B cell (primary cell): ENCODE measurements at regions of chr9 and their contacts with region 1.

Region 1: GRCh38 chr9:112074250-112075008 is 100.7 kb downstream of the SUSD1 start:
- DNase-seq: peak; percentile 82
- ATAC-seq: peak; percentile 80
- H3K4me3 ChIP-seq: peak overlapping the region in 1 of 5 experiments; percentile 9
- H3K4me3 Mint-ChIP-seq: peak overlapping the region; percentile 74
- H3K27ac ChIP-seq: peak overlapping the region; percentile 16 to 38
- H3K27ac Mint-ChIP-seq: peak overlapping the region; percentile 77
- H3K4me1 ChIP-seq: peaks cover 39 to 72% of the 10 kb centered on the region in 2 donors
- H3K4me1 Mint-ChIP-seq: peaks cover 65% of the 10 kb centered on the region
- H3K27me3 ChIP-seq: no peaks in the 10 kb centered on the region
- H3K27me3 Mint-ChIP-seq: no peaks in the 10 kb centered on the region
- CTCF ChIP-seq: peak; percentile 99

Region 2: GRCh38 chr9:111759762-111760639 is 314.4 kb before region 1 on chr9:
- CTCF ChIA-PET with region 1: interaction called, 274 read pairs
- POLR2A ChIA-PET with region 1: no interaction called
- intact Hi-C with region 1: loop called (anchors 1 kb)
- DNase-seq: peak; percentile 82
- ATAC-seq: peak; percentile 82
- H3K4me3 ChIP-seq: no peak overlapping the region
- H3K4me3 Mint-ChIP-seq: no peak overlapping the region
- H3K27ac ChIP-seq: no peak overlapping the region
- H3K27ac Mint-ChIP-seq: no peak overlapping the region
- H3K4me1 ChIP-seq: peaks cover 0 to 3% of the 10 kb centered on the region in 2 donors
- H3K4me1 Mint-ChIP-seq: peaks cover 4% of the 10 kb centered on the region
- H3K27me3 ChIP-seq: no peaks in the 10 kb centered on the region
- H3K27me3 Mint-ChIP-seq: no peaks in the 10 kb centered on the region
- CTCF ChIP-seq: peak; percentile 91

Region 3: DNA sequence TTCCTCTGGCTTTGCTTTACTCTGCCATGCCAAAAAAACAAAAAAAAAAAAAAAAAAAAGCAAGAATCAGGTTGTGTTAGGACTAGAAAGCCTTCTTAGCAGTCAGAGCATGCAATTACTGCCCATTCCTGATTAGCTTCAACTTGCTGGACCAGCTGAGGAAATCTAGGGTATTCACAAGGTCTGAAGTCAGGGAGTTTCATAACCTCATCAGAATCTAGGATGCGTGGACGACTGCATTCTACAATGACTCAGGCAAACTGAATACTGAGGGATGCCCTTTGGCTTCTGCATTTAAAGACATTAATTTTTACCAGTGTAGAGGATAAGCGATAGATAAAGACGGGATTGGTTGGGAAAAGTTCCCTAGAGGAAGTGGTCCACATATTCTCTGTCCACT is 240.5 kb before region 1 on chr9:
- CTCF ChIA-PET with region 1: interaction called, 46 read pairs
- POLR2A ChIA-PET with region 1: no interaction called
- intact Hi-C with region 1: no loop called
- DNase-seq: no peak
- ATAC-seq: no peak
- H3K4me3 ChIP-seq: no peak overlapping the region
- H3K4me3 Mint-ChIP-seq: no peak overlapping the region
- H3K27ac ChIP-seq: no peak overlapping the region
- H3K27ac Mint-ChIP-seq: no peak overlapping the region
- H3K4me1 ChIP-seq: peaks cover 3 to 4% of the 10 kb centered on the region in 2 donors
- H3K4me1 Mint-ChIP-seq: peaks cover 7% of the 10 kb centered on the region
- H3K27me3 ChIP-seq: no peaks in the 10 kb centered on the region
- H3K27me3 Mint-ChIP-seq: no peaks in the 10 kb centered on the region
- CTCF ChIP-seq: no peak

Region 4: DNA sequence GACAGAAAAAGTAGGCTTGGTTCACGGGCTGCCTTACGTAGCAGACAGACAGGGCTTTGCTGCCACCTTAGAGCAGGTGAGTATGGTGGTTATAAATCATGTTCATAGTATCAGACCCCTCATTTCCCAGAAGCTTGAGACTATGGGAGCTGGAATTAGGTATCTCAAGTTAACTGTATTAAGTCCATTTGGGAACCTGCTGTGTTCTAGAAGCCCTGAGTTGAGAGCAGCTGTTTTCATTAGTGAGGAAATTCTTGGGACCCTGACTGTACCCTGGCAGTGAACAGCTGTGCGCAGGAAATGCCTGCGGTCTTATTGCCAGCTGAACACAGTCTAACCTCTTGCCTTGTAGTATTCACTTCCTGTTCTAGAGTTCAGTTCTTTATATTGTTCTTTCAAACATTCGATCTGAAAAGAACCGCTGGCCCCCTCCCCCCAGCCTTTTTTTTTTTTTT is 148.0 kb before region 1 on chr9:
- CTCF ChIA-PET with region 1: interaction called, 12 read pairs
- POLR2A ChIA-PET with region 1: interaction called, 9 read pairs
- intact Hi-C with region 1: loop called (anchors 1 kb)
- DNase-seq: peak; percentile 86
- ATAC-seq: peak; percentile 99
- H3K4me3 ChIP-seq: no peak overlapping the region
- H3K4me3 Mint-ChIP-seq: peak overlapping the region; percentile 33
- H3K27ac ChIP-seq: peak overlapping the region; percentile 25 to 72
- H3K27ac Mint-ChIP-seq: peak overlapping the region; percentile 90
- H3K4me1 ChIP-seq: peaks cover 22 to 32% of the 10 kb centered on the region in 2 donors
- H3K4me1 Mint-ChIP-seq: peaks cover 39% of the 10 kb centered on the region
- H3K27me3 ChIP-seq: no peaks in the 10 kb centered on the region
- H3K27me3 Mint-ChIP-seq: no peaks in the 10 kb centered on the region
- CTCF ChIP-seq: no peak

Region 5: GRCh38 chr9:112012026-112012902 is 62.2 kb before region 1 on chr9:
- CTCF ChIA-PET with region 1: interaction called, 18 read pairs
- POLR2A ChIA-PET with region 1: interaction called, 3 read pairs
- intact Hi-C with region 1: loop called (anchors 10 kb)
- DNase-seq: peak; percentile 62
- ATAC-seq: peak; percentile 82
- H3K4me3 ChIP-seq: peak overlapping the region in 1 of 5 experiments; percentile 22
- H3K4me3 Mint-ChIP-seq: peak overlapping the region; percentile 57
- H3K27ac ChIP-seq: peak overlapping the region; percentile 56 to 74
- H3K27ac Mint-ChIP-seq: peak overlapping the region; percentile 88
- H3K4me1 ChIP-seq: peaks cover 44% of the 10 kb centered on the region in 2 donors
- H3K4me1 Mint-ChIP-seq: peaks cover 65% of the 10 kb centered on the region
- H3K27me3 ChIP-seq: no peaks in the 10 kb centered on the region
- H3K27me3 Mint-ChIP-seq: no peaks in the 10 kb centered on the region
- CTCF ChIP-seq: no peak

Region 6: GRCh38 chr9:112050544-112051475 is 23.6 kb before region 1 on chr9:
- CTCF ChIA-PET with region 1: interaction called, 18 read pairs
- POLR2A ChIA-PET with region 1: no interaction called
- intact Hi-C with region 1: no loop called
- DNase-seq: no peak
- ATAC-seq: no peak
- H3K4me3 ChIP-seq: no peak overlapping the region
- H3K4me3 Mint-ChIP-seq: no peak overlapping the region
- H3K27ac ChIP-seq: no peak overlapping the region
- H3K27ac Mint-ChIP-seq: no peak overlapping the region
- H3K4me1 ChIP-seq: peaks cover 26 to 32% of the 10 kb centered on the region in 2 donors
- H3K4me1 Mint-ChIP-seq: peaks cover 48% of the 10 kb centered on the region
- H3K27me3 ChIP-seq: no peaks in the 10 kb centered on the region
- H3K27me3 Mint-ChIP-seq: no peaks in the 10 kb centered on the region
- CTCF ChIP-seq: no peak

Region 7: DNA sequence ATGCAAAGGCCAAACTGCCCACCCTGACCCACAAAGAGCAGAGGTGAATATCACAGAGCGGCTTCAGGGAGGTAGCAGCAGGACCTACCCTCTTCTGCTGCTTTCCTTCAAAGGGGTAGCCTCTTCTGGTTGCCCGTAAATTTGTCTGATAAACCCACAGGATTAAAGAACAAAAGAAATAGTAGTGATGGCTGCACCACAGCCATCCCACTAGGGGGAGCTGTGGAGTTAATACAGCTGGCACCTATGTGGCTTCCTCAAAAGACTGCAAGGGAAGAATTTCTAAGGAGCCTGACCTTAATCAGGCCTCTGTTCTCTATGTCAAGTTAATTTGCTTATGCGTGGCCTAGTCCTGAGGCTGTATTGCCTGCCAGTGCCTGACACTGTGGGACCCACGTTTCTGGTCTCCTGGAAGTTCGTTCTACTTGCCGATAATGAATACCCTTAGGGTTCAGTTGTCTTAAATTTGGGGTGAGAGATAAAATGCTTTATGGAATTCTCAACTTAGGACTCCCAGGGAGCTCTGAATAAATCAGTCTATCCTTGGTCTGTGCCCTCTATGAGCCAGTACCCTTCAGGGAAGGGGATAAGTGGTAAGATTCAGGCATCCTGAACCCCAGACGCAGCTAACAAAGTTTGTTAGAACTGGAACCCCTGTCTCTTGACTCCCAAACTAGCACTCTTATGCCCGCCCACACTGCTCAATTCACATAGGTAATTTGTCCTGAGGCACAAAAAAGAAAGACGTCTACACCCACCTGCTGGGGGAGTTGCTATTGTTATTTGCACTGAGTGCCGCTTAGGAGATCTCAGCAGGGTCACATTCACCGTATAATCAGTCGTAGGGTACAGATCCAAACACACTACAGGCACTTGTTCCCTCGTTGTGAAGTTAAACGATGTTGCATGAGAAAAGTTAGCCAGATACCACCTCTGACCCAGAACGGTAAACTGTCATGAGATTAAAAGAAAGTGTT is 23.6 kb after region 1 on chr9:
- CTCF ChIA-PET with region 1: interaction called, 10 read pairs
- POLR2A ChIA-PET with region 1: no interaction called
- intact Hi-C with region 1: no loop called
- DNase-seq: peak; percentile 86
- ATAC-seq: peak; percentile 94
- H3K4me3 ChIP-seq: no peak overlapping the region
- H3K4me3 Mint-ChIP-seq: no peak overlapping the region
- H3K27ac ChIP-seq: no peak overlapping the region
- H3K27ac Mint-ChIP-seq: peak overlapping the region; percentile 16
- H3K4me1 ChIP-seq: peaks cover 10 to 13% of the 10 kb centered on the region in 2 donors
- H3K4me1 Mint-ChIP-seq: peaks cover 37% of the 10 kb centered on the region
- H3K27me3 ChIP-seq: no peaks in the 10 kb centered on the region
- H3K27me3 Mint-ChIP-seq: no peaks in the 10 kb centered on the region
- CTCF ChIP-seq: peak; percentile 94

Region 8: GRCh38 chr9:113446323-113446740 is 1371.9 kb after region 1 on chr9:
- CTCF ChIA-PET with region 1: no interaction called
- POLR2A ChIA-PET with region 1: no interaction called
- intact Hi-C with region 1: no loop called
- DNase-seq: peak; percentile 58
- ATAC-seq: no peak
- H3K4me3 ChIP-seq: no peak overlapping the region
- H3K4me3 Mint-ChIP-seq: no peak overlapping the region
- H3K27ac ChIP-seq: no peak overlapping the region
- H3K27ac Mint-ChIP-seq: no peak overlapping the region
- H3K4me1 ChIP-seq: no peaks in the 10 kb centered on the region
- H3K4me1 Mint-ChIP-seq: no peaks in the 10 kb centered on the region
- H3K27me3 ChIP-seq: no peaks in the 10 kb centered on the region
- H3K27me3 Mint-ChIP-seq: no peaks in the 10 kb centered on the region
- CTCF ChIP-seq: peak; percentile 80